CD4-positive, alpha-beta T cell (primary cell): ENCODE measurements at regions of chrX and their contacts with region 1.

Region 1: DNA sequence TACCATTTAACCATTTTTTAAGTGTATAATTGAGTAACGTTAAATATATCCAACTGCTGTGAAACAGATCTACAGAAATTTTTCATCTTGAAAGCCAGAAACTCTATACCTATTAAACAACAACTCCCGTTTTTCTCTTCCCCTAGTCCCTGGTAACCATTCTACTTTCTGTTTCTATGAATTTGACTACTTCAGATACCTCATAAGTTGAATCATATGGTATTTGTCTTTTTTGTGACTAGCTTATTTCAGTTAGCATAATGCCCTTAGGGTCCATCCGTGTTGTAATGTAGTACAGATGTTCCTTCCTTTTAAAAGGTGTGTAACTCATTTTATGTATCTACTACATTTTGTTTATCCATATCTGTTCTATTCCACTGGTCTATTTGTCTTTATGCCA is 48.7 kb downstream of the STAG2 start:
- DNase-seq: peak in 1 of 14 experiments; percentile 2
- ATAC-seq: no peak
- H3K4me3 ChIP-seq: no peak overlapping the region
- H3K4me3 Mint-ChIP-seq: peak overlapping the region; percentile 36
- H3K27ac ChIP-seq: no peak overlapping the region
- H3K27ac Mint-ChIP-seq: peak overlapping the region; percentile 82
- H3K4me1 ChIP-seq: peaks cover 9% of the 10 kb centered on the region
- H3K4me1 Mint-ChIP-seq: peaks cover 90% of the 10 kb centered on the region
- H3K27me3 ChIP-seq: no peaks in the 10 kb centered on the region
- H3K27me3 Mint-ChIP-seq: no peaks in the 10 kb centered on the region
- CTCF ChIP-seq: no peak

Region 2: GRCh38 chrX:122238801-122239200 is 1771.4 kb before region 1 on chrX:
- CTCF ChIA-PET with region 1: no interaction called
- POLR2A ChIA-PET with region 1: no interaction called
- intact Hi-C with region 1: no loop called
- DNase-seq: no peak
- ATAC-seq: no peak
- H3K4me3 ChIP-seq: no peak overlapping the region
- H3K4me3 Mint-ChIP-seq: no peak overlapping the region
- H3K27ac ChIP-seq: no peak overlapping the region
- H3K27ac Mint-ChIP-seq: no peak overlapping the region
- H3K4me1 ChIP-seq: no peaks in the 10 kb centered on the region
- H3K4me1 Mint-ChIP-seq: no peaks in the 10 kb centered on the region
- H3K27me3 ChIP-seq: no peaks in the 10 kb centered on the region
- H3K27me3 Mint-ChIP-seq: no peaks in the 10 kb centered on the region
- CTCF ChIP-seq: no peak

Region 3: GRCh38 chrX:124023838-124024238 is 13.7 kb after region 1 on chrX:
- CTCF ChIA-PET with region 1: no interaction called
- POLR2A ChIA-PET with region 1: no interaction called
- intact Hi-C with region 1: loop called in 1 of 2 experiments (anchors 2 kb)
- DNase-seq: no peak
- ATAC-seq: no peak
- H3K4me3 ChIP-seq: no peak overlapping the region
- H3K4me3 Mint-ChIP-seq: no peak overlapping the region
- H3K27ac ChIP-seq: peak overlapping the region in 1 of 2 donors; percentile 7
- H3K27ac Mint-ChIP-seq: peak overlapping the region; percentile 57
- H3K4me1 ChIP-seq: peaks cover 5% of the 10 kb centered on the region
- H3K4me1 Mint-ChIP-seq: peaks cover 14% of the 10 kb centered on the region
- H3K27me3 ChIP-seq: no peaks in the 10 kb centered on the region
- H3K27me3 Mint-ChIP-seq: no peaks in the 10 kb centered on the region
- CTCF ChIP-seq: no peak